Breast epithelium (tissue), 4 donors: ENCODE measurements at regions of chr6 and their contacts with region 1.

Region 1: GRCh38 chr6:125107896-125108295 is 45.7 kb upstream of the TPD52L1 start:
- DNase-seq: no peak
- H3K4me3 ChIP-seq: no peak overlapping the region
- H3K27ac ChIP-seq: no peak overlapping the region
- H3K4me1 ChIP-seq: no peaks in the 10 kb centered on the region
- H3K27me3 ChIP-seq: no peaks in the 10 kb centered on the region
- CTCF ChIP-seq: no peak
- POLR2A ChIP-seq: no peak

Region 2: GRCh38 chr6:124879110-124880011 is 228.5 kb before region 1 on chr6:
- intact Hi-C with region 1: loop called (anchors 5 kb)
- DNase-seq: no peak
- H3K4me3 ChIP-seq: no peak overlapping the region
- H3K27ac ChIP-seq: no peak overlapping the region
- H3K4me1 ChIP-seq: no peaks in the 10 kb centered on the region
- H3K27me3 ChIP-seq: no peaks in the 10 kb centered on the region
- CTCF ChIP-seq: no peak
- POLR2A ChIP-seq: no peak

Region 3: DNA sequence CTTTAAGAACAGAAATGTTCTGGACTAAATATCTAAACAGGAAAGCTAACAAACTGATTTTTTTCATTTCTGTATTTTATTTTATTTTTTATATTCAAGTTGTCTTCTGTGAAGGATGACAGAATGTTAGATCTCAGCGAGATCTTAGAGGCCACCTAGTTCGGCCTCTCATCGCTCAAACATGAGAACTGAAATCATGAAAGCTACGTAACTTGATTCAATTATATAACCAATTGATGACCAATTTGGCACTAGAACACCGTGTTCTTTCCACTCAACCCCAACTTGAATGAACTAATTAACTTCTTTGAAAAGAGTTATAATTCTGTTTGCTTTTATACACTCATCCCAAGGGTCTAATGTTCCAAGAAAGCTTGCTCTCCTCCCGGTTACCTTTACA is 170.3 kb before region 1 on chr6:
- intact Hi-C with region 1: loop called (anchors 2 kb)
- DNase-seq: no peak
- H3K4me3 ChIP-seq: no peak overlapping the region
- H3K27ac ChIP-seq: peak overlapping the region in 1 of 2 donors; percentile 68
- H3K4me1 ChIP-seq: no peaks in the 10 kb centered on the region
- H3K27me3 ChIP-seq: no peaks in the 10 kb centered on the region
- CTCF ChIP-seq: no peak
- POLR2A ChIP-seq: no peak